CD8-positive, alpha-beta T cell (primary cell): ENCODE measurements at regions of chr4 and their contacts with region 1.

Region 1: GRCh38 chr4:69823481-69824186 is 36.3 kb downstream of the SULT1E1 start:
- DNase-seq: peak in 8 of 9 experiments; percentile 23 to 73 (median 52)
- ATAC-seq: peak; percentile 93
- H3K4me3 ChIP-seq: no peak overlapping the region
- H3K4me3 Mint-ChIP-seq: no peak overlapping the region
- H3K27ac ChIP-seq: no peak overlapping the region
- H3K27ac Mint-ChIP-seq: no peak overlapping the region
- H3K4me1 ChIP-seq: peaks cover 7% of the 10 kb centered on the region
- H3K4me1 Mint-ChIP-seq: peaks cover 8% of the 10 kb centered on the region
- H3K27me3 ChIP-seq: no peaks in the 10 kb centered on the region
- H3K27me3 Mint-ChIP-seq: no peaks in the 10 kb centered on the region
- CTCF ChIP-seq: peak; percentile 63

Region 2: GRCh38 chr4:68283714-68284113 is 1539.9 kb before region 1 on chr4:
- CTCF ChIA-PET with region 1: no interaction called
- POLR2A ChIA-PET with region 1: no interaction called
- intact Hi-C with region 1: no loop called
- DNase-seq: no peak
- ATAC-seq: no peak
- H3K4me3 ChIP-seq: no peak overlapping the region
- H3K4me3 Mint-ChIP-seq: no peak overlapping the region
- H3K27ac ChIP-seq: no peak overlapping the region
- H3K27ac Mint-ChIP-seq: no peak overlapping the region
- H3K4me1 ChIP-seq: no peaks in the 10 kb centered on the region
- H3K4me1 Mint-ChIP-seq: no peaks in the 10 kb centered on the region
- H3K27me3 ChIP-seq: no peaks in the 10 kb centered on the region
- H3K27me3 Mint-ChIP-seq: peaks cover 9% of the 10 kb centered on the region
- CTCF ChIP-seq: no peak

Region 3: DNA sequence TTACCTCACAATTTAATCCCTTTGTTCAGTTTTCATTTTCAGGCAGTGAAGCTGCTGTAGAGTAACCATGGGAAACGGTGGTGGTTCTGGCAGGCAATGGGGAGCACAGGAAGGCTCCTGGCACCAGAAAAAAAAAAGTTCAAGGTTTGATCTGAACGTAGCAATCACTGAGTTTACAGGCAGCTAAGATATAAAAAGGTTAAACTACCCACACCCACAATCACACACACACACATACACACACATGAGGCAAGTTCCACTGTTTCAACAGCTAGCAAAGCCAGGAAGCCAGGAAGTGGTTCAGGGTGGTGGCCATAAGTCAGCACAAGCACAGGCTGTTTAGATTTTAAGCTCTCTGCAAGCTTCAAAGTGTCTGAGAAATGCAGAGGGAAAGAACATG is 63.2 kb before region 1 on chr4 and contains the start of gene SULT1B1:
- CTCF ChIA-PET with region 1: interaction called, 20 read pairs
- POLR2A ChIA-PET with region 1: interaction called, 5 read pairs
- intact Hi-C with region 1: loop called in 1 of 2 experiments (anchors 2 kb)
- DNase-seq: peak in 8 of 9 experiments; percentile 37 to 78 (median 56)
- ATAC-seq: peak; percentile 94
- H3K4me3 ChIP-seq: peak within 1 kb of the TSS; percentile 22 to 43
- H3K4me3 Mint-ChIP-seq: peak within 1 kb of the TSS; percentile 87
- H3K27ac ChIP-seq: peak within 1 kb of the TSS; percentile 34
- H3K27ac Mint-ChIP-seq: peak within 1 kb of the TSS; percentile 91
- H3K4me1 ChIP-seq: peaks cover 47% of the 10 kb centered on the region
- H3K4me1 Mint-ChIP-seq: peaks cover 68% of the 10 kb centered on the region
- H3K27me3 ChIP-seq: no peaks in the 10 kb centered on the region
- H3K27me3 Mint-ChIP-seq: no peaks in the 10 kb centered on the region
- CTCF ChIP-seq: no peak
- total RNA-seq, gene SULT1B1: 4.5 to 5.1 TPM

Region 4: GRCh38 chr4:69881173-69881773 is 57.6 kb after region 1 on chr4:
- CTCF ChIA-PET with region 1: interaction called, 19 read pairs
- POLR2A ChIA-PET with region 1: no interaction called
- intact Hi-C with region 1: loop called (anchors 1 to 2 kb)
- DNase-seq: peak in 4 of 9 experiments; percentile 13 to 57 (median 24)
- ATAC-seq: peak; percentile 78
- H3K4me3 ChIP-seq: no peak overlapping the region
- H3K4me3 Mint-ChIP-seq: no peak overlapping the region
- H3K27ac ChIP-seq: no peak overlapping the region
- H3K27ac Mint-ChIP-seq: no peak overlapping the region
- H3K4me1 ChIP-seq: no peaks in the 10 kb centered on the region
- H3K4me1 Mint-ChIP-seq: no peaks in the 10 kb centered on the region
- H3K27me3 ChIP-seq: no peaks in the 10 kb centered on the region
- H3K27me3 Mint-ChIP-seq: no peaks in the 10 kb centered on the region
- CTCF ChIP-seq: peak; percentile 90

Region 5: DNA sequence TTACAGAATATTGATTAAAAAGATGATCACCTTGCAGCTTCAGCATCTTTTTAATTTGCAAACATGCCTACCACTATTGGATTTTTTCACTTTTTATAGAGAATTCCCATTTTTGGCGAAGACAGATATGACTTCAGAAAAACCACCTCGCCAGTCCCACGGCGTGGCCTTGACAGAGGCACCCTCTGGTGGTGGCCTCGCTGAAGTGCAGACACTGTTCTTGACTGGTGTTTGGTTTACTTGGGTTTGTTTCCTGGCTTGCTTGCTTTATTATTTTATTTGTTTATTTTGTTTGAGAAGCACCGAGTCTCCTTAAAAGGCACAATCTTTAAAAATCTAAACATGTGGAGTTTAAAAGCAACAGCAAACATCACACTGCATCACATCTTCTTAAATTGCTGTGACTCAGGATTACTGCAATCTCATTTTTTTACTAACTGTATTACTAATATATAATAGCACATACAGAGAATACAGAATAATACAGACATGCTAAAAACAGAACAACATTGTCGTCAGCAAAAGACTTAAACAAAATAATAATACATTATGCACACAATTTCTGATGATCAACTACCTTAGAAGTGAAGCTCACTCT is 681.6 kb after region 1 on chr4:
- CTCF ChIA-PET with region 1: no interaction called
- POLR2A ChIA-PET with region 1: no interaction called
- intact Hi-C with region 1: loop called in 1 of 2 experiments (anchors 5 kb)
- DNase-seq: peak; percentile 2 to 65 (median 48)
- ATAC-seq: peak; percentile 58
- H3K4me3 ChIP-seq: no peak overlapping the region
- H3K4me3 Mint-ChIP-seq: no peak overlapping the region
- H3K27ac ChIP-seq: no peak overlapping the region
- H3K27ac Mint-ChIP-seq: no peak overlapping the region
- H3K4me1 ChIP-seq: no peaks in the 10 kb centered on the region
- H3K4me1 Mint-ChIP-seq: no peaks in the 10 kb centered on the region
- H3K27me3 ChIP-seq: peaks cover 0 to 2% of the 10 kb centered on the region in 2 experiments
- H3K27me3 Mint-ChIP-seq: no peaks in the 10 kb centered on the region
- CTCF ChIP-seq: peak; percentile 80